ENCODE measurements at regions of chr2 and their contacts with region 1.

Region 1: DNA sequence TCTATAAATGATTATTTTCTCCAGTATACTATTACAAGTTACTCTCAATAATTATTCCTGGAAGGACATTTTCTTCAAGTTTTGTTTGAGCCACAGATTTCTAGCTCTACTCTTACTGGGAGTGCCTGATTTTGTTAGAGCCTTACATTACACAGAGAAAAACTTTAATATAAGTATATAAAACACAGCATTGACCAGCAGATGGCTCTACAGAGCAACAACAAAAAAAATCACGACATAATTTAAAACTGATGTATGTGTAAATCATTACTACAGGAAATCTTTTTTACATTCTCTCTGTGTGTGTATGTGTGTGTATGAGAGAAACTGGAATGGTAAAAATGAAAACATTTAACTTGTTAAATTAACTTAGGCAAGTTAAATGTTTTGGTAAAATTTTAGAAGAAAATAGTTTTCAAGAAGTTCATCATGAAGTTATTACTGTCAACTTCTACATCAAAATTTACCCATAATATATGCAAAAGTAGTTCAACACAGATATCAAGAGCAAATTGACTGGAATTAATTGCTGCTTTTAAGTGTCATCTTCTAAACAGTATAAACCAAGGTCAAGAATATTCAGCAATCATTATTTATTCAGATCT is 103.3 kb downstream of the MDH1 start:
- DNase-seq: no peak
- ATAC-seq: peak; percentile 56 to 85 (median 77)
- H3K4me3 ChIP-seq: no peak overlapping the region
- H3K27ac ChIP-seq: no peak overlapping the region
- H3K4me1 ChIP-seq: no peaks in the 10 kb centered on the region
- H3K27me3 ChIP-seq: no peaks in the 10 kb centered on the region
- CTCF ChIP-seq: peak in 1 of 4 donors; percentile 26

Region 2: DNA sequence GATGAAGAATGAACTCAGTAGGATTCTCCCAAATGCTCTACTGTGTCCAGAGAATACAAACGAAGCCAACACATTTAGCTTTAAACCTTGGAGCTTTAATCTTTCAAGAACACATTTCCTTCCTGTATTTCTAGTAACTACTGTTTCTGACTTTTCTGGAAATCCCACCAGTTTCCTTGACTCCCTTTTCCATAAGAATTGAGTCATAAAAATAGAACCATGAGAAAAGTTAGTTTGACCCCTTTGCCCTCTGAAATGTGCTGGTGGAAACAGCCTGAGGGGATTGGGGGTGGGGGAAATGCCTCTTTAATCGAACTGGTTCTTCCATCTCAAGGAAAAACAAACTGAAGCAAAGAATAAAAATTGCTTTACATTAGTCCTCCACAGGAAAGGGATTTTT is 1310.0 kb before region 1 on chr2:
- intact Hi-C with region 1: no loop called
- DNase-seq: no peak
- ATAC-seq: no peak
- H3K4me3 ChIP-seq: no peak overlapping the region
- H3K27ac ChIP-seq: no peak overlapping the region
- H3K4me1 ChIP-seq: no peaks in the 10 kb centered on the region
- H3K27me3 ChIP-seq: no peaks in the 10 kb centered on the region
- CTCF ChIP-seq: no peak

Region 3: DNA sequence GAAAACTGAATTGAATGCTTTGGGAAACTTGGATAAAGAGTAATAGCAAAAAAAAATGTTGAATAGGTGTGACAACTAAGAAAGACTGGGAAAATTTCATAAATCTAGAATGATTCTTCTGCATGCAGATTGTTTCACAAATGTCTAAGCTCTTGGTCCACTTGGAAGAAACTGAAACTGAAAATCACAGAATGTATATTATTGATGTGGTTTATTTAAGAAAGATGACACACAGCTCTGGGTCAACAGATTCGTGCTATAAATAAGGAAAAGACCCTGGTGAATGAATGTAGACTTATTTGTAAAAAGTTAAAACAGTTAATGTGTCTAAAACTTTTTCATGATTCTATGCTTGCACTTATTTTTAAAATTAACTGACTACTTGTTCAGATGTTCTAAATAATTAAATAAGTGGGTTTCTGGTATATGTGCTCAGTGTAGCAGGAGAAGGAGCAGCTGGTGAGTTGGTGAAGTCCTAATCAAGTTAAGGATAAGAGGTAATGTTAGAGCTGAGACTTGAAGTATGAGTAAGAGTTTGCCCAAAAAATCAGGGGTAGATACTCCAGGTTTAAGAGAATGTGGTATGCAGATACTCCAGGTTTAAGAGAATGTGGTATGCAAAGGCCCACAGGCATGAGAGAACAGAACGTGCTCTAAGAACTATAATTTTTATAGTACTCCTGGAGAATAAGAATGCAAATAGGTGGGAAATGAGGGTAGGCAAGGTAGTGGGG is 174.1 kb after region 1 on chr2:
- intact Hi-C with region 1: loop called in 1 of 3 experiments (anchors 5 kb)
- DNase-seq: no peak
- ATAC-seq: no peak
- H3K4me3 ChIP-seq: no peak overlapping the region
- H3K27ac ChIP-seq: no peak overlapping the region
- H3K4me1 ChIP-seq: peaks cover 0 to 3% (median 3%) of the 10 kb centered on the region in 3 donors
- H3K27me3 ChIP-seq: no peaks in the 10 kb centered on the region
- CTCF ChIP-seq: no peak

Measured in pancreas (tissue), 10 donors.